ENCODE measurements at regions of chr21 and their contacts with region 1.

Region 1: GRCh38 chr21:33434770-33435360 is 31.7 kb downstream of the IFNGR2 start:
- DNase-seq: peak in 1 of 2 donors; percentile 45
- ATAC-seq: peak; percentile 99 to 100
- H3K4me3 ChIP-seq: no peak overlapping the region
- H3K27ac ChIP-seq: peak overlapping the region; percentile 70 to 90 (median 86)
- H3K4me1 ChIP-seq: peaks cover 14 to 16% of the 10 kb centered on the region in 2 donors
- H3K27me3 ChIP-seq: no peaks in the 10 kb centered on the region
- CTCF ChIP-seq: no peak
- POLR2A ChIP-seq: no peak

Region 2: DNA sequence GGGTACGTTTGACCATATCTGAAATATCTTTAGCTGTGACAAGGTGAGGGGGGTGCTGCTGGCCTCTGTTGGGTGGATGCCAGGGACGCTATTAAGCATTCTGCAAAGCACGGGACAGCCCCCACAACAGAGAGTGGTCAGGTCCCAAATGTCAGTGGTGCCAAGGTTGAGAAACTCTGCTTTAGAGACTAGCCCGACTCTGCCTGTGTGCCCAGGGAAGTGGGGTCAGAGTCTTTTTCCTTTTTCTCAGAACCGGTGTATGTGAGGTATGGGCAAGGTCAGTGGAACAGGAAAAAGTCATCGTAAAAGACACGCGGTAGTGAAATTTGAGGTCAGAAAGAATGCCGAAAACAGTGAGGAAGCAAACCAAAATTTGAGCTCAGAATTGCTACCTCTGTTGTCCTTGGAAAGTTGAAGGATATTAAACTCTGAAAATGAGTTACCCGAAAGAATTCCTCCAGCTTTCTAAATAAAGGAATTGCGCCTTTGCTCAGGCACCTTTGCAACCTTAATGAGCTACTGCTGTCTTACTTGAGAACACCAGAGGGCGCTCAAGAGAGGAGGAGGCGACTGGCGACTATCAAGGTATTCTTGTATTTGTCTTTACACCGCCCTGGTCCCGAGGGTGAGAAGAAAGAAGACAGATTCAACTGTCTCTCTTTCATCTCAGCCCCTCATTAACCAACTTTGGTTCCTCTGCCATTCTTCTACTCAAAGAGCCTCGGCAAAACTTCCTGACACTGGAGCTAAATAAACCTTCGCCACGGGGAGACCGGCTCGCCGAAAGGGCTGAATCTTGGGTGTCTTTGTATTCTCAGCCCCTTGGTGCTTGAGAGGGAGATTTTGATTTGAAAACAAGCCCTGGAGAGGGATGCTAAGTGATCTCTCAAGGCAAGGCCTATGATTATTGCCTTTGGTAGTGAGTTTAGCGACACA is 494.5 kb before region 1 on chr21:
- in situ Hi-C with region 1: loop called in 1 of 4 experiments (anchors 25 kb)
- intact Hi-C with region 1: no loop called
- DNase-seq: no peak
- ATAC-seq: peak in 1 of 2 donors; percentile 33
- H3K4me3 ChIP-seq: no peak overlapping the region
- H3K27ac ChIP-seq: no peak overlapping the region
- H3K4me1 ChIP-seq: no peaks in the 10 kb centered on the region
- H3K27me3 ChIP-seq: peaks cover 0 to 2% (median 0%) of the 10 kb centered on the region in 3 donors
- CTCF ChIP-seq: peak; percentile 34 to 77 (median 59)
- POLR2A ChIP-seq: no peak

Region 3: DNA sequence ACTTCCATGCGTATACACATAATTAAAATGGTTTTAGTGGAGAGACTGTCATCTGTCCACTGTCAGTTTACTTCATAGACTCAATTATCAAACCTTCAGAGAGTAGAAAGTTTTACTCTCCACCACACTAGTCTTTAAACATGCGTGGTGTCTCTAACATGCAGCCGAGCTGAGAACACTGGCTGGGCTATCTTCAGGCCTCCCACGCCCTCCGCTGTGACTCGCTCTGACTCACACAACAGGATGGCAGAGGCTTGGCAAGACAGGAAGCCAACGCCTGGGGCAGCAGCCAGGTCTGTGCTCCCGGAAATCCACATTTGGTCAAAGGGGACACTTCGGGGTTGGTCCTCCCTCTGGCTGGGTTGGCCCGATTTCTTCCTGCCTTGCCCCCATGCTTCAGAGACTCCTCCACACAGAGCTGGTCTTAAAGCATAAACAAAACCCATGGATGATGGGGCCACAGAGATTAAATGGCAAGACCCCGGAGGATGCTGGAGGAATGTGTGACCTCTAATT is 54.3 kb before region 1 on chr21:
- in situ Hi-C with region 1: no loop called
- intact Hi-C with region 1: loop called (anchors 10 kb)
- DNase-seq: peak; percentile 86 to 92
- ATAC-seq: peak; percentile 96 to 98
- H3K4me3 ChIP-seq: no peak overlapping the region
- H3K27ac ChIP-seq: peak overlapping the region; percentile 72 to 80 (median 78)
- H3K4me1 ChIP-seq: peaks cover 18 to 34% of the 10 kb centered on the region in 2 donors
- H3K27me3 ChIP-seq: no peaks in the 10 kb centered on the region
- CTCF ChIP-seq: no peak
- POLR2A ChIP-seq: peak; percentile 27 to 41

Region 4: DNA sequence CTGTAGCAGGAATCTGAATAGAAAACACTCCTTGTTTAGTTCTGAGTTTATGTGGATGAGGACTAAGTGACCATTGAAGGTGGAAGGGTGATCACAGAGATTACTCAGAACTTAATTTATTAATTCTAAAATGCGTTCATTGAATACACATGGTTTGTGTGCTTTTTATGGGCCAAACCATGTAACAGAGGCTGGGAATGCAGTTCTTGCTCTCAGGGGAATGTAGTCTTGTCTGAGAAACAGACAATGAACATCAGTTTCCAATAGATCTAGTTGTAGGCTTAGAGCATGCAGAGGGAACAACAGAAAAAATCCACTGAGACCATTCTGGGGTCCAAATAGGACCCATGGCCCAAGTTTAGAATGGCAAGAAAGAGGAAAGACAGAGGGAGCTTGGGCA is 253.5 kb after region 1 on chr21:
- in situ Hi-C with region 1: no loop called
- intact Hi-C with region 1: no loop called
- DNase-seq: no peak
- ATAC-seq: no peak
- H3K4me3 ChIP-seq: no peak overlapping the region
- H3K27ac ChIP-seq: no peak overlapping the region
- H3K4me1 ChIP-seq: peaks cover 42 to 50% of the 10 kb centered on the region in 2 donors
- H3K27me3 ChIP-seq: no peaks in the 10 kb centered on the region
- CTCF ChIP-seq: no peak
- POLR2A ChIP-seq: no peak

Measured in gastrocnemius medialis (tissue), 4 donors.